Activated CD8-positive, alpha-beta T cell treated with anti-CD3 and anti-CD28 coated beads for 36 hours (primary cell): ENCODE measurements at regions of chr11 and their contacts with region 1.

Region 1: DNA sequence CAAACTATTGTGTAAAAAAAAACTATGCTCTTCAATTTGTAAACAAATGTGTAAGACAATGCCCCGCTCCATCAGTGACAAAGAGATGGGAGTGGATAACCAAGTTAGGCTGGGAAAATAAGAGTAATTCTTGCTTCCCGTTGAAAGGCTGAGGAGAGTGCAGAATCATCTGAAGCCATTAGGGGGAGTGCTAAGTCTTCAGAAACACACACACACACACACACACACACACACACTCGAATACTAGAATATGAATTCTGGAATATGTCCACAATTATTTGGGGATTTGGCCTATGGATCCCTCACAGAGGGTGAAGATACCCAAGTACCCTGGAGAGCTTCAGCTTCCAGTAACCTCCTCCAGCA is 27.8 kb upstream of the ROBO3 start:
- DNase-seq: peak; percentile 19
- ATAC-seq: peak; percentile 69
- H3K4me3 Mint-ChIP-seq: no peak overlapping the region
- H3K27ac Mint-ChIP-seq: no peak overlapping the region
- H3K4me1 Mint-ChIP-seq: peaks cover 15% of the 10 kb centered on the region
- H3K27me3 Mint-ChIP-seq: peaks cover 49% of the 10 kb centered on the region
- CTCF ChIP-seq: peak; percentile 32

Region 2: DNA sequence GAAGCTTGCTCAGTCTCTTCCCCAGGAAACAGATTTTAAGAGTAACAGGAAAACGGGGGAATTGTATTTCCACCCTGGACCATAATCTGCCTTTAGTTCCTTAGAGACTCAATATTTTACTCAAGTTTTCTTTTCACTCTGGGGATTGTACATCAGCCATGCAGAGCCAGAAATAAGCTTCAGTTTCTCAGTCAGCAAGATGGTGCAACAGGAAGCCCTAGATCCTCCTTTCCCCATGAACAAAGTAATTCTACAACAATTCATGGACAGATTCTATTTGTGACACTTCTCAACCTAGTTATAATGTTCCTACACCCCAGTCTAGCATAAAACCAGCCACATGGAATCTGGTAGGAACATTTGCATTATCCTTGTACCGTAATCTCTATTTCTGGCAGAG is 477.9 kb before region 1 on chr11:
- CTCF ChIA-PET with region 1: no interaction called
- POLR2A ChIA-PET with region 1: no interaction called
- intact Hi-C with region 1: no loop called
- DNase-seq: no peak
- ATAC-seq: no peak
- H3K4me3 Mint-ChIP-seq: no peak overlapping the region
- H3K27ac Mint-ChIP-seq: no peak overlapping the region
- H3K4me1 Mint-ChIP-seq: no peaks in the 10 kb centered on the region
- H3K27me3 Mint-ChIP-seq: no peaks in the 10 kb centered on the region
- CTCF ChIP-seq: no peak

Region 3: GRCh38 chr11:124644426-124645280 is 192.8 kb before region 1 on chr11:
- CTCF ChIA-PET with region 1: interaction called, 30 read pairs
- POLR2A ChIA-PET with region 1: interaction called, 3 read pairs
- intact Hi-C with region 1: no loop called
- DNase-seq: peak; percentile 27
- ATAC-seq: peak; percentile 78
- H3K4me3 Mint-ChIP-seq: no peak overlapping the region
- H3K27ac Mint-ChIP-seq: no peak overlapping the region
- H3K4me1 Mint-ChIP-seq: no peaks in the 10 kb centered on the region
- H3K27me3 Mint-ChIP-seq: no peaks in the 10 kb centered on the region
- CTCF ChIP-seq: peak; percentile 94

Region 4: DNA sequence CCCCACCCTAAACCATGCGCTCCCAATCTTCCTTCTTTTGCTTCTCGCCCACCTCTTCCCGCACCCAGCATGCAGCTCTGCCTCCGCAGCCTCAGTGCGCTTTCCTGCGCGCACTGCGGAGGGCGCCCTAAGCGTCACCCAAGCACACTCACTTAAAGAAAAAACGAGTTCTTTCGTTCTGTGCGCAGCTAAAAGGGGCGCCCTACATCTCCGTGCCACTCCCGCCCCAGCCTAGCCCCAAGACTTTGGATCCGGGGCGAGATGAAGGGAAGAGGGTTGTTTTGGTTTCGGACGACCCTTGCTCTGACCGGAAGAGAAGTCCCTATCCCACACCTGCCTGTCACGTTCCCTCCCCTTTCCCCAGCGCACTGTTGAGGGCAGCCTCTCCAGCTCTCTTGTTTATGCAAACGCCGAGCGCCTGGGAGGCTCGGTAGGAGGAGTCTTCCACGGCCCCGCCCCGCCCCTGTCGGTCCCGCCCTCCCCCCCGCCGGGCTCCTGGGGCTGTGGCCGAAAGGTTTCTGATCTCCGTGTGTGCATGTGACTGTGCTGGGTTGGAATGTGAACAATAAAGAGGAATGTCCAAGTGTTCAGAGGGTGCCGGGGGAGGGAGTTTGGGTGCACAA is 90.7 kb before region 1 on chr11:
- CTCF ChIA-PET with region 1: interaction called, 10 read pairs
- POLR2A ChIA-PET with region 1: no interaction called
- intact Hi-C with region 1: no loop called
- DNase-seq: peak; percentile 79
- ATAC-seq: peak; percentile 92
- H3K4me3 Mint-ChIP-seq: peak overlapping the region; percentile 79
- H3K27ac Mint-ChIP-seq: peak overlapping the region; percentile 79
- H3K4me1 Mint-ChIP-seq: peaks cover 4% of the 10 kb centered on the region
- H3K27me3 Mint-ChIP-seq: peaks cover 6% of the 10 kb centered on the region
- CTCF ChIP-seq: no peak

Region 5: GRCh38 chr11:124769801-124770639 is 67.5 kb before region 1 on chr11:
- CTCF ChIA-PET with region 1: interaction called, 40 read pairs
- POLR2A ChIA-PET with region 1: no interaction called
- intact Hi-C with region 1: no loop called
- DNase-seq: no peak
- ATAC-seq: no peak
- H3K4me3 Mint-ChIP-seq: no peak overlapping the region
- H3K27ac Mint-ChIP-seq: no peak overlapping the region
- H3K4me1 Mint-ChIP-seq: peaks cover 2% of the 10 kb centered on the region
- H3K27me3 Mint-ChIP-seq: no peaks in the 10 kb centered on the region
- CTCF ChIP-seq: no peak

Region 6: GRCh38 chr11:124812876-124813275 is 24.6 kb before region 1 on chr11:
- CTCF ChIA-PET with region 1: interaction called, 22 read pairs
- POLR2A ChIA-PET with region 1: no interaction called
- intact Hi-C with region 1: no loop called
- DNase-seq: no peak
- ATAC-seq: no peak
- H3K4me3 Mint-ChIP-seq: no peak overlapping the region
- H3K27ac Mint-ChIP-seq: no peak overlapping the region
- H3K4me1 Mint-ChIP-seq: no peaks in the 10 kb centered on the region
- H3K27me3 Mint-ChIP-seq: peaks cover 31% of the 10 kb centered on the region
- CTCF ChIP-seq: no peak

Region 7: DNA sequence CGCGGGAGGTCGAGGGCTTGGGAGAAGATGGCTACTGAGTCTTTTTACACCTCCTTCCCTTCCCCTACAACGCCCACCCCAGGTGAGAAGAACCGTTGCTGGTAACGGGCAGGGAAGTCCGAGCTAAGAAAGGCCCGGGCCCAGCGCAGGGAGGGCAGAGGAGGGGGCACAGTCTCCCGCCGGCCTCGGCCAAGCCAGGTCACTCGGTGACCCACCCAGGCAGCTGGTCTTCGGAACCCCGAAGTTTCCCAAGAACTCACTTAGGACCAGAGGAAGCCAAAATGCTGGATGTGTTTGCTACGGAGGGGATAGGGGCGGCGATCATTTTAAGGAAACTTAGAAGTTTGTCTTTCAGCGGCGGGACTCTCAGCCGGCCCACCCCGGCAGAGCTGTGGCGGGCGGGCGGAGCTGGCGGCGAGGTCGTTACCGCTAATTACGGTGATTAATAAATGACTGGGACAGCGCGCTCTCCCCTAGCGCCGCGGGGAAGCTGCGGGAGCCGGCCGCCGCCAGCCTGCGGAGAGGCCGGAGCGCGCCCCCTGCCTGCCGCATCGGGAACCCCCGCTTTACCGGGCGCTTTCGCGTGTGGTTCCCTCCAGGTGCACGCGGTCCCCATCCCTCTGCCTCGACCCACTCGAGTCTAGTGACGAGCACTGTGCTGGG is 28.6 kb after region 1 on chr11:
- CTCF ChIA-PET with region 1: interaction called, 37 read pairs
- POLR2A ChIA-PET with region 1: interaction called, 5 read pairs
- intact Hi-C with region 1: loop called (anchors 2 kb)
- DNase-seq: peak; percentile 64
- ATAC-seq: peak; percentile 65
- H3K4me3 Mint-ChIP-seq: no peak overlapping the region
- H3K27ac Mint-ChIP-seq: no peak overlapping the region
- H3K4me1 Mint-ChIP-seq: peaks cover 36% of the 10 kb centered on the region
- H3K27me3 Mint-ChIP-seq: peaks cover 88% of the 10 kb centered on the region
- CTCF ChIP-seq: peak; percentile 75

Region 8: DNA sequence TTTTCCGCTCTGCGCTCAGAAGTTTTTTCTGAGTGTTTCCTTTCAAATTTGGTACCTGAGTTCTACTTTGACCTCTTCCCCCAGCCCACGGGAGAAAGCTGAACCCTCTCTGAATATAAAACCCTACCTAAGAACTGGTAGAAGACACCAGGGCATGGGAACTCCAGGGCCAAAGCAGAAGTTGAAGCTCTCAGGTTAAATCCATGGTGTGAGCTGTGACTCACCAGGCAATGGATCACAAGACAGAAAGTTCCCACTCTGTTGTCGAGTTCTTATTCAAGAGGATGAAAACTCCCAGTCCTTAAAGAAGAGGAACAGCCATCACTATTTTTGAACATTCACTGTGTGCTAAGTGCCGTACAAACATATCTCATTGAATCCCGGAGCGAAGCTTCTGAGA is 265.0 kb after region 1 on chr11:
- CTCF ChIA-PET with region 1: no interaction called
- POLR2A ChIA-PET with region 1: no interaction called
- intact Hi-C with region 1: no loop called
- DNase-seq: no peak
- ATAC-seq: no peak
- H3K4me3 Mint-ChIP-seq: no peak overlapping the region
- H3K27ac Mint-ChIP-seq: no peak overlapping the region
- H3K4me1 Mint-ChIP-seq: peaks cover 12% of the 10 kb centered on the region
- H3K27me3 Mint-ChIP-seq: no peaks in the 10 kb centered on the region
- CTCF ChIP-seq: no peak